Common myeloid progenitor, CD34-positive (primary cell): ENCODE measurements at regions of chr22 and their contacts with region 1.

Region 1: DNA sequence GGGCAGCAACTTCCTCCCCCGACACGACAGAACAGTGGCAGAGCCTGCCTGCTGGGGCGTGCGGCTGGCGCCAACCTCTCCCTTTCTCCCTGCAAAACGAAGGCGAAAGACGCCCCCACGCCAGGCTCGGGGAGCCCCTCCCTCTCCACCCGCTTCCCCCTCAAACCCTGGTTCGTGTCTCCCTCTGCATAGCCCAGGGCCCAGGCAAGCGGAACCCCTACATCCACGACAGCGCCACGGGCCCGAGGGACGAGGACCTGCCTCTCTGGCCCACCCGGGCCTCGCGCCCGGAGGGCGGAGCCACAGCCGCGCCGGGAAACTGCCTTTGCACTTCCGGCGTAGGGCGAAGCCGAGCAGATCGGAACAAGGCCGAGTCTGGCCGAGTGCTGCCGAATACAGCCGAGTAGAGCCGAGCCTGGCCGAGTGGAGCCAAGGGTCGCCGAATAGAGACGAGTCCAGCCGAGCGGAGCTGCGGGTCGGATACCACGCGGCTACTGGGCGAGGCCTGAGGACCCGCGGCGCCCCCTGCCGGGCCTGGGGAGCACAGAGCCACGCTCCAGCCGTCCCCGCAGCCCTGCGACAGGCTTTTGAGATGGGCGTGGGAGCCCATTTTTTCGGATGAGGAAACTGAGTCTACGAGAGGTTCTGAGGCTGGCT is 11.2 kb upstream of the C1QTNF6 start:
- DNase-seq: peak; percentile 98 to 99 (median 99)
- H3K4me3 ChIP-seq: peak overlapping the region; percentile 48 to 82 (median 61)
- H3K27ac ChIP-seq: peak overlapping the region; percentile 78 to 81
- H3K4me1 ChIP-seq: peaks cover 3 to 31% (median 19%) of the 10 kb centered on the region in 4 experiments
- H3K27me3 ChIP-seq: no peaks in the 10 kb centered on the region

Region 2: DNA sequence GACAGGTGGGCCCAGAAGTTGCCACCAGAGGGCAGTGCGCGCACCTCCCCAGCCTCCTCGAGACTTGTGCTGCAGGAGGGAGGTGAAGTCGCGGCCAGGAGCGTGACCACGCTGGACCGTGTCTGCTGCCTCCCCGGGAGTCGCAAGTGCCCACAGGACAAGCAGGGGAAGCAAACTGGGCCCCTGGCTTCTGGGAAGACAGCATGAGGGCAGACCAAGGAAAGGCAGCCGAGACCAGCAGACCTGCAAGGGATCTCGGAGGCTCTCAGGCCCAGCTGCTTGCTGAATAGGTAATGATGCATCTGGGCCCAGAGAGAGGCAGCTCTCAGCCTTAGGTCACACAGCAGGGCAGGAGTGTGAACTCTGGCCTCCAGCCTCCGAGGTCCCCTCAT is 32.6 kb before region 1 on chr22:
- CTCF ChIA-PET with region 1: interaction called, 39 read pairs
- POLR2A ChIA-PET with region 1: no interaction called
- DNase-seq: peak; percentile 69 to 84 (median 73)
- H3K4me3 ChIP-seq: peak overlapping the region in 1 of 7 experiments; percentile 17
- H3K27ac ChIP-seq: no peak overlapping the region
- H3K4me1 ChIP-seq: peaks cover 0 to 35% (median 7%) of the 10 kb centered on the region in 4 experiments
- H3K27me3 ChIP-seq: no peaks in the 10 kb centered on the region

Region 3: DNA sequence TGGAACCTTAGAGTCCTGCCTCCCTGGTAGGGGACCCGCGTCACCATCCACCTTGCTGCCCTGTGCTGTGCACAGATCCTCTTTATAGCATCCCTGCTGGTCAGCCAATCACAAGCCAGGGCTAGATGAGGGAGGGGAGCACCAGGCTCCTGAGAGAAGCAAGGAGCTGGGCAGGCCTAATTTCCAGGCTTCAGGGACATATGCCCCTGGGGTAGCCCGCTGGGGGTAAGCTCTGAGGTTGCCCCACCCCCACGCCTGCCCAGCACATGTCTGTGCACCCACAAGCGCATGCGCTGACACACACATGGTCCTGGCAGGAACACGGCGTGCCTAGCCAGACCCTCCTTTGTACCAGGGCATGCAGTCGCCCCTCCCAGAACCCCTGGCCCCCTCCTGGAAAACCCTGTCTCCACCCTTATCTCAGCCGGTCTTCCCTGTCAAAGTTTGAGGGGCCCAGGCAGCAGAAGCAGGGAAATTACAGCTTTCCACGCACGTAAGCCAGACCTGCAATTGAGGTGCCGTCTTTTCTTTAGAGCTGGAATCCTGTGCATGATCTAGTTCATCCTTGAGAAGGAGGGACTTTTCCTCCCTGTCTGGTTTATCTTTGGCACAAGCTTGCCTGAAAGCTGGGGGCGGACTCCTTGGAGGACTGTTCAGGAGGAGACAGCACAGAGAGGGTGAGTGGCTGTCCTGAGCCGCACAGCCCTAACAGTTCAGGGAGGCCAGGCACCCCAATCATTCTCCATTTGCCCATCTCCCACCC is 11.0 kb after region 1 on chr22:
- CTCF ChIA-PET with region 1: interaction called, 17 read pairs
- POLR2A ChIA-PET with region 1: interaction called, 3 read pairs
- DNase-seq: no peak
- H3K4me3 ChIP-seq: no peak overlapping the region
- H3K27ac ChIP-seq: no peak overlapping the region
- H3K4me1 ChIP-seq: peaks cover 0 to 10% (median under 1%) of the 10 kb centered on the region in 4 experiments
- H3K27me3 ChIP-seq: no peaks in the 10 kb centered on the region

Region 4: GRCh38 chr22:37218771-37219411 is 19.7 kb after region 1 on chr22:
- CTCF ChIA-PET with region 1: interaction called, 31 read pairs
- POLR2A ChIA-PET with region 1: no interaction called
- DNase-seq: peak; percentile 68 to 98 (median 96)
- H3K4me3 ChIP-seq: peak overlapping the region in 1 of 7 experiments; percentile 17
- H3K27ac ChIP-seq: no peak overlapping the region
- H3K4me1 ChIP-seq: peaks cover 9 to 69% (median 40%) of the 10 kb centered on the region in 4 experiments
- H3K27me3 ChIP-seq: no peaks in the 10 kb centered on the region

Region 5: DNA sequence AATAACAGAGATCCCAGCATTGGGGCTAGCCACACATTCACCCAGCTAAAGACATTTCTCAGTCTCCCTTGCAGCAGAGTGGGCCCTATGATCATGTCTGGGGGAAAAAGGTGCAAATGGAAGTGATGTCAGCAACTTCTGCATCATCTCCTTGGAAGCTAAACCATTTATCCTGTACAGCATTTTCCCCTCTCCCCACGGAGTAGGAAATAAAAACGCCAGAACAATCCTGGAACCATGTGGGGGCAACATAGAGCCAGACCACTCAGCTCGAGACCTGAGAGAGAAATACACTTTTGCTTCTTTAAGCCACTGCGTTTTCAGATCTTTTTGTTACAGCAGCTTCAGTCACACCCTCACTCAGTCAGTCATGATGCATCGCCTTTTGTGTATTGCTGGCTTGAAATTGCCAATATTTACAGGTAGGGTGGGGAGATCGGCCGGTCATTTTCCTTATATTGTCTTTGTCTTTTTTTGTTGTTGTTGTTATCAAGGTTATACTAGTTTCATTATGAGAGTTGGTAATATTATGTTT is 54.0 kb after region 1 on chr22:
- CTCF ChIA-PET with region 1: no interaction called
- POLR2A ChIA-PET with region 1: no interaction called
- DNase-seq: peak in 1 of 3 donors; percentile 23
- H3K4me3 ChIP-seq: no peak overlapping the region
- H3K27ac ChIP-seq: no peak overlapping the region
- H3K4me1 ChIP-seq: peaks cover 2 to 14% (median 5%) of the 10 kb centered on the region in 4 experiments
- H3K27me3 ChIP-seq: no peaks in the 10 kb centered on the region